ENCODE measurements at regions of chr5 and their contacts with region 1.

Region 1: GRCh38 chr5:74442466-74442865 is 198.1 kb downstream of the ENC1 start:
- DNase-seq: no peak
- H3K4me3 ChIP-seq: no peak overlapping the region
- H3K27ac ChIP-seq: no peak overlapping the region
- H3K4me1 ChIP-seq: no peaks in the 10 kb centered on the region
- H3K27me3 ChIP-seq: no peaks in the 10 kb centered on the region
- CTCF ChIP-seq: no peak

Region 2: DNA sequence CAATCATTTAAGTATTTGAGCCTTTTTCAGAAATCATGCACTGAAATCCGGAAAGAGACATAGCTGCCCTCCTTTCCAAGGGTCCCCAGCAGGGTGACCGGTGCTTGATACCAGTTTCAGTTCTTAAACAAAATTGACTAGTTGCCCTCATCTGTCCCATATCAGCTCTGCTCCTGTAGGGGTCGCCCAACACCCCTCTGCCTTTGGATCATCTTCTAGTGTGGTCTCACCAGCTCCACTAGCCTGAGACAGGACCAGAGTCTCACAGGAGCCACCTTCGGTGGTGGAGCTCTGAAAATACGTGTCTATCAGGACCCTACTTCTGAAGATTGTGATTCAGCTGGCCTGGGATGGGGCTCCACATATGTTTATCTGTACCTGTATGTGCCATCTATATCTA is 230.1 kb before region 1 on chr5:
- CTCF ChIA-PET with region 1: interaction called, 15 read pairs
- dilution Hi-C with region 1: no loop called
- in situ Hi-C with region 1: no loop called
- intact Hi-C with region 1: no loop called
- DNase-seq: no peak
- H3K4me3 ChIP-seq: no peak overlapping the region
- H3K27ac ChIP-seq: no peak overlapping the region
- H3K4me1 ChIP-seq: no peaks in the 10 kb centered on the region
- H3K27me3 ChIP-seq: no peaks in the 10 kb centered on the region
- CTCF ChIP-seq: peak; percentile 38 to 52

Region 3: GRCh38 chr5:74490811-74491210 is 48.3 kb after region 1 on chr5:
- CTCF ChIA-PET with region 1: no interaction called
- dilution Hi-C with region 1: loop called (anchors 5 kb)
- in situ Hi-C with region 1: no loop called
- intact Hi-C with region 1: no loop called
- DNase-seq: no peak
- H3K4me3 ChIP-seq: no peak overlapping the region
- H3K27ac ChIP-seq: no peak overlapping the region
- H3K4me1 ChIP-seq: no peaks in the 10 kb centered on the region
- H3K27me3 ChIP-seq: no peaks in the 10 kb centered on the region
- CTCF ChIP-seq: no peak